ENCODE measurements at regions of chr14 and their contacts with region 1.

Region 1: DNA sequence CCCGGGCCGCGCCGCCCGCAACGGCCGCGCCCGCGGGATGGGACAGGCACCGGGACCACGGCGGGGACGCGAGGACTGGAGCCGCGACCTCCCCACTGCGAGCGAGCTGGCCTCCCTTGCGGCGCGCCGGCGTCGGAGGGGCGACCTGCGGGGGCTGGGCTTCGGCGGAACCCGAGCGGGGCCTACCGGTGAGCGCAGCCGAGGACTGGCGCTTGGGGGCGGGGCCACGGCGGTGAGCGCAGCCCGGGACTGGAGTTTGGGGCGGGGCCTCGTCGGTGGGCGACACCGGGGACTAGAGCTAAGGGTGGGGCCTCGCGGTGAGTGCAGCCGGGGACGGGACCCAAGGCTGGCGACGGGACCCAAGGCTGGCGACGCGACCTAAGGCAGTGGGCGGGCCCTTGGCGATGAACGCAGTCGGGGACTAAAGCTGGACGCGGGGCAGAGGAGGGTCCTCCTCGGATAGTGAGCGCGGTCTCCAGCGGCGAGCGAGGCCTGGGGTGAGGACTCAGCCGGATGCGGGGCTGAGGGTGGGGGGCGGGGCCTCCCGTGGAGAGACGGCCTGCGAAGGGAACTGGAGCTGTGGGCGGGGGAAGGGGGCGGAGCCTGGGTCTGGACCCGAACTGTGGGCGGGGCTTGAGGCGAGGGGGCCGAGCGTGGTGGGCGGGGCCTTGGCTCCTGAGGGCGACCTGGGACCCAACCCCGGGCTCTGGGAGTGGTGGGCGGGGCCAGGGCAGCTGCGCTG is at the start of gene BRF1:
- DNase-seq: peak; percentile 96 to 99 (median 98)
- ATAC-seq: peak; percentile 85 to 89
- H3K4me3 Mint-ChIP-seq: peak within 1 kb of the TSS; percentile 85 to 96 (median 90)
- H3K27ac Mint-ChIP-seq: peak within 1 kb of the TSS; percentile 76 to 98 (median 96)
- H3K4me1 Mint-ChIP-seq: peaks cover 19 to 53% (median 37%) of the 10 kb centered on the region in 4 donors
- H3K27me3 Mint-ChIP-seq: no peaks in the 10 kb centered on the region
- polyA plus RNA-seq, gene BRF1: 7.1 to 10.9 (median 9.2) TPM

Region 2: GRCh38 chr14:105228562-105228961 is 72.4 kb before region 1 on chr14:
- POLR2A ChIA-PET with region 1: no interaction called
- DNase-seq: no peak
- ATAC-seq: no peak
- H3K4me3 Mint-ChIP-seq: no peak overlapping the region
- H3K27ac Mint-ChIP-seq: no peak overlapping the region
- H3K4me1 Mint-ChIP-seq: peaks cover 0 to 1% (median 0%) of the 10 kb centered on the region in 4 donors
- H3K27me3 Mint-ChIP-seq: no peaks in the 10 kb centered on the region

Region 3: DNA sequence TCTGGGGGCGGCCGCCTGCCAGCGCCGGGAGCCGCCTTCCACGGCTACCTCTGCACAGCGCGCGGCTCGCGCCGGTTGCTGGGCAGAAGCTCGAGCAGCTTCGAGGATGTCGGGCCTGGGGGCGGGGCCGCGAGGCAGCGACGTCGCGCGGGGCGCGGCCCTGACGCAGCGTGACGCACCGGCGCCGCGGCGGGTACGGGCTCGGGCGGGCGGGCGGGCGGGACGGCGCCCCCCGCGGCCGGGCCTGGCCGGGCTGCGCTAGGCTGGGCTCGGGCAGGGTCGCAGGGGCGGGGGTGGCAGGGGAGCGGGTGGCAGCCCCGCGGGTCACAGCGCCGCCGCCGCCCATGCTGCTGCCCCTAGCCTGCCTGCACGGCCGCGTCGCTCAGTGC is 52.6 kb before region 1 on chr14 and contains the start of gene BTBD6:
- POLR2A ChIA-PET with region 1: interaction called, 12 read pairs
- DNase-seq: peak; percentile 82 to 92 (median 89)
- ATAC-seq: peak; percentile 88 to 92
- H3K4me3 Mint-ChIP-seq: peak within 1 kb of the TSS; percentile 73 to 87 (median 78)
- H3K27ac Mint-ChIP-seq: peak within 1 kb of the TSS; percentile 43 to 92 (median 82)
- H3K4me1 Mint-ChIP-seq: peaks cover 12 to 44% (median 38%) of the 10 kb centered on the region in 4 donors
- H3K27me3 Mint-ChIP-seq: no peaks in the 10 kb centered on the region
- polyA plus RNA-seq, gene BTBD6: 5.5 to 15.6 (median 14.9) TPM

Measured in naive thymus-derived CD8-positive, alpha-beta T cell (primary cell).